Heart right ventricle (tissue), 16 donors: ENCODE measurements at regions of chr6 and their contacts with region 1.

Region 1: GRCh38 chr6:104699593-104700329 is 160.0 kb downstream of the HACE1 start:
- DNase-seq: no peak
- ATAC-seq: no peak
- H3K4me3 ChIP-seq: no peak overlapping the region
- H3K27ac ChIP-seq: no peak overlapping the region
- H3K4me1 ChIP-seq: peaks cover 0 to 8% (median 3%) of the 10 kb centered on the region in 9 donors
- H3K27me3 ChIP-seq: no peaks in the 10 kb centered on the region
- CTCF ChIP-seq: no peak

Region 2: DNA sequence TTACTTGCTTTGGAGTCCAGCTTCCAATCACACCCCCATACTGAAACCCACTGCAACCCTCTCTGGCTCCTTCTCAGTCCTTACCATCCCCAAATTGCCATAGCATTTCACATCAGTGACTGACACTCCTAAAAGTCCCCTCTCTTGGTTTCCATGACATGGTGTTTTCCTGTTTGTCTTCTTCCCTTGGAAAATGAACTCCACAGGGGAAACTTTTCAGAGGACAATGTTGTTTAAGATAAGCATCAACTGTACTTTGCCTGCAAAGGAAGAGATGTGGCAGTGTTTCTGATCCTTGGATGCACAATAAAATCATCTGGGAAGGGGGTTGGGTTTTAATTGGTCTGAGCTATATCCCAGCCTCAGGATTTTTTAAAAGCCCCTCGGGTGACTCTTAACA is 54.9 kb before region 1 on chr6:
- intact Hi-C with region 1: loop called in 1 of 10 experiments (anchors 5 kb)
- DNase-seq: no peak
- ATAC-seq: no peak
- H3K4me3 ChIP-seq: no peak overlapping the region
- H3K27ac ChIP-seq: peak overlapping the region in 2 of 10 donors; percentile 2 to 49
- H3K4me1 ChIP-seq: peaks cover 0 to 36% (median 0%) of the 10 kb centered on the region in 9 donors
- H3K27me3 ChIP-seq: no peaks in the 10 kb centered on the region
- CTCF ChIP-seq: no peak